Breast epithelium (tissue), 4 donors: ENCODE measurements at regions of chr21 and their contacts with region 1.

Region 1: GRCh38 chr21:34227386-34227852 is 136.4 kb upstream of the KCNE2 start:
- DNase-seq: no peak
- H3K4me3 ChIP-seq: no peak overlapping the region
- H3K27ac ChIP-seq: no peak overlapping the region
- H3K4me1 ChIP-seq: no peaks in the 10 kb centered on the region
- H3K27me3 ChIP-seq: no peaks in the 10 kb centered on the region
- CTCF ChIP-seq: no peak
- POLR2A ChIP-seq: no peak

Region 2: GRCh38 chr21:32448803-32449594 is 1778.4 kb before region 1 on chr21:
- intact Hi-C with region 1: no loop called
- DNase-seq: no peak
- H3K4me3 ChIP-seq: no peak overlapping the region
- H3K27ac ChIP-seq: peak overlapping the region; percentile 65 to 66
- H3K4me1 ChIP-seq: peaks cover 13 to 14% of the 10 kb centered on the region in 2 donors
- H3K27me3 ChIP-seq: no peaks in the 10 kb centered on the region
- CTCF ChIP-seq: no peak
- POLR2A ChIP-seq: no peak

Region 3: DNA sequence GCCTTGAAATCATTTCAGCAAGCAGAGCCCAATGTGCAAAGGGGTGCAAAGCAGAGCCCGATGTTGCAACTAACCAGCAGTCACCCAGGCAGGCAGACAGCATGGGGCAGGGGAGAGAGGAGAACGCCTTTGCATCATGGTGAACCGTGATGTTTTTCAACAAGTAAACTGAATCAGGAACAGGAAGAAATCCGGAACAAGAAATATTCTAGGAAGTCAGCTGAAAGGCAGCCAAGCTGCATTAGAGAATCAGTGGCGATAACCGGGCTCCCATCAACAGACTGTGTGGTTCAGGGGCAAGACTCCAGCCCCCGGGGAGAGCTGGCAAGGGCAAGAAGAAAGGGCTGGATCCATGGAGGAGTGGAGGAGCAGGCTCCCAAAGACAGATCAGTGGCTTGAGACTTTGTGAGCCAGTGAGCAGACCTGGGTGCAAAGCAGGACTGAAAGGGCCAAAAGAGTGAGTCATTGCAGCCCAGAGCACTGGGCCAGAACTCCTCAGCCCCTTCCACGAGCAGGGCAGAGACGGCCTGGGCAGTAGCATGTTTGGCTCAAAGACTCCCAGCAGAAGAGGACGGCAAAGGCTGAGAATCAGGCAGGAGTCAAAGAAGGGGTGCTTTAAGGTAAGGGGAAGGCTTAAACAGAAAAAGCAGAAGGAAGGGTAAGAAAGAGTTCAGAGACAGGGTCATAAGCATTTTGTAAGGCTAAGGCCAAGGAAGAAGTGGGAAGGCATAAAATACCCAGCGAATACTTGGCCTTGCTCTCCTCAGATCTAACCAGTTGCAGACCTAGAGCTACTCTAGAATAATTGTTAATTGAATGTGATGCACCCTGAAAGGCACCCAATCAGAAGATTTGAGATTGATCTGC is 1677.9 kb after region 1 on chr21:
- intact Hi-C with region 1: loop called (anchors 10 kb)
- DNase-seq: no peak
- H3K4me3 ChIP-seq: no peak overlapping the region
- H3K27ac ChIP-seq: peak overlapping the region in 1 of 2 donors; percentile 25
- H3K4me1 ChIP-seq: no peaks in the 10 kb centered on the region
- H3K27me3 ChIP-seq: no peaks in the 10 kb centered on the region
- CTCF ChIP-seq: no peak
- POLR2A ChIP-seq: no peak